ENCODE measurements at regions of chr2 and their contacts with region 1.

Region 1: DNA sequence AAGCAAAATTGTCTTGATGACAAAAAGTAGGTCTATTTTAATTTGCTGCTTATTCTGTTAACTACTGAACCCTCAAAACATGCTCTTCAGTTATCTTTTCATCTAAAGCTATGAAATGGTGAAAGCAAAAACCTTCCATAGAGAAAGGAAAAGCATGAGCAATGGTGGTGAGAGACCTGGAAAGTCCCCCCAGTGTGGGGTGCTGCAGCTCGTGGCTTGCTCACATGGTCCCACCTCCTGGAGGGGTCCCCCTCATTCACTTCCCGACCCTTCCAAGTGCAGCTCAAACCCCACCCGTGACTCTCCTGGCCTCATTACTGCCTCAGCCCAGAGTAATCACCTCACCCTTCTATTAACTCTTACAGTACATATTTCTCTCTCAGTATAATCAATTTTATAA is 301.8 kb upstream of the HNRNPA3 start:
- DNase-seq: no peak
- CTCF ChIP-seq: no peak

Region 2: DNA sequence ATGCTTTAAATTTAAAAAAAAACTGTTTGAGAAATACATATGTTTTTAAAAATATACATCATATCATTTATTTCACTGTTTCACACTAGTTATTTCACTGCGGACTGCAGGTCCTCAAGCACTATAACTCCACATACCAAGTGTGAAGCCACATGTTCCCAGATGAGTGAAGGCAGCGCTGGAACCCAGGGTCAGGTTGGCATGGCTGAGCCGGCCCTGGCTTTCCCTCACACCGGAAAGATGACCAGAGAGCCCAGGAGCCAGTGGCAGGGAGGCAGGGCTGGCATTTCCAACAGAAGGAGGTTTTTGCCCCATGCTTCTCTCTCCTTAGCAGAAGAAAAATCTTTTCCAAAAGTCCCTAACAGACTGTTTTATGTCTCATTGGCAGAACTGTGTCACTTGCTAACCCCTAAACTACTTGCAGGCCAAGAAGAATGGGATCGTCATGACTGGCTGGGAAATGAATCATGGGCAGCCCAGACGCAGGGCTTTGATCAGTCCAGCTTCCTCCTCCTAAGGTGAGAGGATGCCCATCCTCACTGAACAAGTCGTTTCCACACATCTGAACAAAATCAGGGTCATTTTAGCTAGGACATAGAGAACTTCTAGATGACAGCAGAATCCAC is 14.2 kb after region 1 on chr2:
- CTCF ChIA-PET with region 1: interaction called, 10 read pairs
- POLR2A ChIA-PET with region 1: no interaction called
- DNase-seq: no peak
- CTCF ChIP-seq: no peak